ENCODE measurements at regions of chr2 and their contacts with region 1.

Region 1: GRCh38 chr2:219218732-219219701 is at the start of gene ABCB6:
- DNase-seq: peak; percentile 96 to 98
- H3K4me3 ChIP-seq: peak within 1 kb of the TSS; percentile 50 to 69 (median 60)
- H3K27ac ChIP-seq: peak within 1 kb of the TSS; percentile 81 to 95 (median 94)
- H3K4me1 ChIP-seq: peaks cover 25 to 49% (median 39%) of the 10 kb centered on the region in 4 donors
- H3K27me3 ChIP-seq: no peaks in the 10 kb centered on the region
- CTCF ChIP-seq: no peak
- EP300 ChIP-seq: no peak
- POLR2A ChIP-seq: peak in 2 of 4 donors; percentile 22 to 47
- total RNA-seq, gene ABCB6: 8.2 to 41.5 (median 29.5) TPM

Region 2: DNA sequence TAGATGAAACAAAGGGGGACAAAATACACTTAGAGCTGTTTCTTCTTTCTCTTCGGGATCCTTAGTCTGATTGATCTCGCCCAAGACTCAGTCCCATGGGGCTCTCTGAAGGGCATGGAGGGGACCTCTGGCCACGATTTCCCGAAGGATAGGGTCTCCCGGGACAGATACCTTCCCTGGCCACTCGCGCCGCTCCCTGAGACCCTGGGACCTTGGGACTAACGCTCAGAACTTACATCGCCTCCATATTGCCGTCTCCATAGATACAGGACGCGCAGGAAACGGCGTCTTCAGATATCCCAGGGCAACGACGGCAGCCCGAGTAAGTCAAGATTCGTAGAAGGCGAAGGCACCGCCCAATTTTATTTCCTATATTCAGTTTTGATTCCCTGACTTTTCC is 177.8 kb before region 1 on chr2 and contains the start of gene CFAP65:
- intact Hi-C with region 1: no loop called
- DNase-seq: peak; percentile 48 to 81
- H3K4me3 ChIP-seq: peak within 1 kb of the TSS in 3 of 4 donors; percentile 22 to 34 (median 34)
- H3K27ac ChIP-seq: no peak within 1 kb of the TSS
- H3K4me1 ChIP-seq: peaks cover 5 to 32% (median 22%) of the 10 kb centered on the region in 4 donors
- H3K27me3 ChIP-seq: peaks cover 0 to 98% (median 17%) of the 10 kb centered on the region in 3 donors
- CTCF ChIP-seq: no peak
- EP300 ChIP-seq: no peak
- POLR2A ChIP-seq: no peak
- total RNA-seq, gene CFAP65: 2.6 TPM in 1 of 5 donors, not detected in the others

Region 3: GRCh38 chr2:219171231-219171651 is 47.8 kb before region 1 on chr2:
- intact Hi-C with region 1: loop called (anchors 5 kb)
- DNase-seq: peak in 1 of 2 donors; percentile 72
- H3K4me3 ChIP-seq: no peak overlapping the region
- H3K27ac ChIP-seq: peak overlapping the region in 4 of 5 donors; percentile 59 to 72 (median 70)
- H3K4me1 ChIP-seq: peaks cover 12 to 48% (median 32%) of the 10 kb centered on the region in 4 donors
- H3K27me3 ChIP-seq: no peaks in the 10 kb centered on the region
- CTCF ChIP-seq: peak in 5 of 7 experiments; percentile 44 to 77 (median 72)
- EP300 ChIP-seq: no peak
- POLR2A ChIP-seq: no peak